IMR-90 (cell line): ENCODE measurements at regions of chr13 and their contacts with region 1.

Region 1: DNA sequence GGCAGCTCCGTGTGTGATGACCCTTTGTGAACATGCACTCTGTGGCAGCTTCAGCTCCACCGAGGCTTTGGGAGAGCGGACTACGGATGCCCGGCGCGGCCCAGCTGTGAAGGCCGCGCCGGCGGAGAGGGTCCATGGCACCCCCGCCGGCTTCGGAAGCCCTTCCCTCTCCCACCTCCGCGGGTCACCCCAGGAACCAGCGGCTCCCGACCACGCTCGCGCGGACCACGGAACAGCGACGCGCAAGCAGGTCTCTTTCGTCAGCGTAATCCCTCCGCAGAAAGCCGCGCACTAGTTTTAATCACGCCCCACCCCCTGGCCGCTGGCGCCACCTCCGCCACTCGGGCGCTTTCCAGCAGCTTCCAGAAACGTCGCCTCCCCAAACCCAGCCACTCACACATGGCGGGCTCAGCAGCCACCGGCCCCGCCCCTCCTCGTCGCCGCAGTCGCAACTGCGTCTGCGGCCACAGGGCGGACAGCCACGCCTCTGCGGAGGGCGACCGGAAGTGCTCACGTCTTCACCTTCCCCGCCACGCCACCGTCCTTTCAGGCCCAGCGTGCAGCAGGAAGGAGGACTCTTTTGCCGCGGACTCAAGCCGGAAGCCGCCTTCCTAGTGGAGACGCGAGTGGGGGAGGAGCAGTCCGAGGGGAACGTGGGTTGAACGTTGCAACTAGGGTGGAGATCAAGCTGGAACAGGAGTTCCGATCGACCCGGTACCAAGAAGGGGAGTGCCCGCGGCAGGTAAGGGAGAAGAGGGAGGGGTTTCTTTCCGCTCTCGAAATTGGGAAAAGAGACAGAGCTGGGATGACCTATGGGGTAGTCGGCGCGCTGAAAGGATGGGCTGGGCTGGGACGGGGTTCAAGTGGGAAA is at the start of gene USPL1:
- DNase-seq: peak; percentile 99
- ATAC-seq: peak; percentile 94
- H3K4me3 ChIP-seq: peak within 1 kb of the TSS; percentile 72
- H3K27ac ChIP-seq: peak within 1 kb of the TSS; percentile 92
- H3K4me1 ChIP-seq: no peaks in the 10 kb centered on the region; the same call in 1 of the 2 replicates
- H3K27me3 ChIP-seq: no peaks in the 10 kb centered on the region
- CTCF ChIP-seq: peak; percentile 22; the same call in 1 of the 2 replicates
- POLR2A ChIP-seq: peak; percentile 92
- RAD21 ChIP-seq: peak; percentile 31; the same call in 1 of the 2 replicates
- total RNA-seq, gene USPL1: 15.4 and 22.5 TPM in 2 replicates

Region 2: GRCh38 chr13:30319655-30320054 is 297.9 kb before region 1 on chr13:
- CTCF ChIA-PET with region 1: no interaction called
- POLR2A ChIA-PET with region 1: no interaction called
- dilution Hi-C with region 1: no loop called
- in situ Hi-C with region 1: no loop called
- intact Hi-C with region 1: no loop called
- DNase-seq: no peak
- ATAC-seq: no peak
- H3K4me3 ChIP-seq: no peak overlapping the region
- H3K27ac ChIP-seq: no peak overlapping the region
- H3K4me1 ChIP-seq: no peaks in the 10 kb centered on the region
- H3K27me3 ChIP-seq: no peaks in the 10 kb centered on the region
- CTCF ChIP-seq: no peak
- POLR2A ChIP-seq: no peak
- RAD21 ChIP-seq: no peak

Region 3: GRCh38 chr13:30341815-30342570 is 275.6 kb before region 1 on chr13:
- CTCF ChIA-PET with region 1: no interaction called
- POLR2A ChIA-PET with region 1: no interaction called
- dilution Hi-C with region 1: no loop called
- in situ Hi-C with region 1: no loop called
- intact Hi-C with region 1: loop called (anchors 1 kb)
- DNase-seq: peak; percentile 94
- ATAC-seq: peak; percentile 89
- H3K4me3 ChIP-seq: no peak overlapping the region
- H3K27ac ChIP-seq: peak overlapping the region; percentile 60; the same call in 1 of the 2 replicates
- H3K4me1 ChIP-seq: peaks cover 32% of the 10 kb centered on the region
- H3K27me3 ChIP-seq: no peaks in the 10 kb centered on the region
- CTCF ChIP-seq: no peak
- POLR2A ChIP-seq: no peak
- RAD21 ChIP-seq: no peak

Region 4: DNA sequence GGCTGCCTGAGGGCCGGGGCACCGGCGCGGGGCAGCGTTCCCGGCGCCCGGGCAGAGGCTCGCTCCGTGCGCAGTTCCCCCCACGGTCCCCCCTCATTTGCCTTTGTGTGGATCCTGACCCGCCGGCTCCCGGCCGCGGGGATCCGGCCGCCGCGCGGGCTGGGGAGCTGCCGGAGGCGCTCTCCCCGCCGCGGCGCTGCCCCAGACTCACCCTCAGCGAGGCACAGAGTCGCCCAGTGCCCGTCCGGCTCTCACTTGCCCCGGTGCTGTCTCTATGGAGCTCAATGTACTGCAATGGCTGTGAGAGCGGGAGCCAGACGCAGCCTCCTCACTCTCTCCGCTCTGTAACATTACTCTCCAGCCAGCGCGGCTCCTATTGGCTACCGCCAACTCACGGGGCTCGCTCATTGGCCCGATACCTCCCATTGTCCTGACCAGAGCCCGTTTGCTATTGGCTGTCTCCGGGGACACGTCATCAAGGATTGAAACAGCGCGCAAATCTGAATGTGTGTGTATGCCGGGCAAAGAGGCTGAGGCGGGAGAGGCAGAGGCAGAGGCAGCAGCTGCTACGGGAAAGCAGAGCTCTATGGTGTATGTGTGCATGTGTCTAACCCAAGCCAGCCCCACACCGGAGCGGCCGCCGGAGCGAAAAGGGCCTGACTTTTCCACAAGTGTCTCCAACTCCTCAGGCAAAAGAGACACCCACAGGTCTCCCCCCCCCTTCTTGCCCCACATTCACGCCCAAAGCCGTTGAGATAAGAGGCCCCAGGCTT is 151.8 kb before region 1 on chr13 and contains the start of gene HMGB1:
- CTCF ChIA-PET with region 1: interaction called, 5 read pairs
- POLR2A ChIA-PET with region 1: no interaction called
- dilution Hi-C with region 1: no loop called
- in situ Hi-C with region 1: loop called (anchors 10 kb)
- intact Hi-C with region 1: loop called (anchors 1 kb)
- DNase-seq: peak; percentile 99
- ATAC-seq: peak; percentile 89
- H3K4me3 ChIP-seq: peak within 1 kb of the TSS; percentile 74
- H3K27ac ChIP-seq: peak within 1 kb of the TSS; percentile 87
- H3K4me1 ChIP-seq: peaks cover 3% of the 10 kb centered on the region
- H3K27me3 ChIP-seq: no peaks in the 10 kb centered on the region
- CTCF ChIP-seq: no peak
- POLR2A ChIP-seq: peak; percentile 93
- RAD21 ChIP-seq: no peak
- total RNA-seq, gene HMGB1: 276 and 480 TPM in 2 replicates

Region 5: DNA sequence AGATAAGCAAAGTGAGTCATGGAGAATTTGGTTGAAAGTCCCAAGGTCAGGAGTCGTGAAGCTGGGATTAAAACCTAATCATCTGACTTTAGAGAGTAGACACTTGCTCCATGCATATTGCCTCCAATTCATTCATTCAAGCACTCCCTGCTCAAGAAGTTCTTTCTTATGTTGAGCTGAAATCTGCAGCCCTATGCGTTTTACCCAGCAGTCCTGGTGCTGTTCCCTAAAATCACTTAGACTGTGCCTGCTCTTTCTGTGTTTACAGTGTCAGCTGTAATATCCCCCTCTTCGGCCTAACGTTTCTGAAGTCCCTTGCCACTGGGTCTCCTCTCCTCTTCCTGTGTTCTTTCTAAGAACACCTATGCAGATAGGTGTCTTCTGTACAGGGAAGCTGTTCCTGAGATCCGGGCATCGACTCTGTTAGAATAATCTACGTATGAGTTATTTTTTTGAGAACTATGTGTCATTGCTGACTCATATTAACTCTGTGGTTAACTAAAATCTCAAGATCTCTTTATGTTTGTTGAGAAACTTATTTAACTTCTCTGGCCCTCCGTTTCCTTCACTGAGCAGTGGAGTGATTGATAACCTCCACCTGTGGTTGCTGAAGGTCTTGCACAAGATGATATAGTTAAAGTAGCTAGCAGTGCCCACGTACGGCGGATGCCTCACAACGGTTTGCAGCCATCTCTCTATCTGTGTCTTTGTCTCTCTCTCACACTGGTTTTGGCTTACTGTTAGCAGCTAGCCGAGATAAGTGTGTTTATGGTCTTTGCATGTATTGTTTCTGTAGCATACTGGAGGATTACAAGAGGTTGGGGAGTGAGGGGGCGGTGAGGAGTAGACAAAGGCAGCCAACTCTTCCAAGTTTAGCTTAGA is 122.5 kb after region 1 on chr13:
- CTCF ChIA-PET with region 1: no interaction called
- POLR2A ChIA-PET with region 1: no interaction called
- dilution Hi-C with region 1: no loop called
- in situ Hi-C with region 1: no loop called
- intact Hi-C with region 1: loop called (anchors 2 kb)
- DNase-seq: peak; percentile 95
- ATAC-seq: peak; percentile 47
- H3K4me3 ChIP-seq: peak overlapping the region; percentile 1; the same call in 1 of the 2 replicates
- H3K27ac ChIP-seq: peak overlapping the region; percentile 63
- H3K4me1 ChIP-seq: peaks cover 27% of the 10 kb centered on the region
- H3K27me3 ChIP-seq: peaks cover 9% of the 10 kb centered on the region
- CTCF ChIP-seq: no peak
- POLR2A ChIP-seq: no peak
- RAD21 ChIP-seq: no peak

Region 6: GRCh38 chr13:30802953-30803478 is 185.5 kb after region 1 on chr13:
- CTCF ChIA-PET with region 1: no interaction called
- POLR2A ChIA-PET with region 1: no interaction called
- dilution Hi-C with region 1: no loop called
- in situ Hi-C with region 1: no loop called
- intact Hi-C with region 1: loop called (anchors 1 kb)
- DNase-seq: peak; percentile 70
- ATAC-seq: peak; percentile 88
- H3K4me3 ChIP-seq: no peak overlapping the region
- H3K27ac ChIP-seq: peak overlapping the region; percentile 10
- H3K4me1 ChIP-seq: peaks cover 24% of the 10 kb centered on the region
- H3K27me3 ChIP-seq: no peaks in the 10 kb centered on the region
- CTCF ChIP-seq: peak; percentile 89
- POLR2A ChIP-seq: no peak
- RAD21 ChIP-seq: peak; percentile 98